AG04450 (cell line): ENCODE measurements at regions of chr4 and their contacts with region 1.

Region 1: DNA sequence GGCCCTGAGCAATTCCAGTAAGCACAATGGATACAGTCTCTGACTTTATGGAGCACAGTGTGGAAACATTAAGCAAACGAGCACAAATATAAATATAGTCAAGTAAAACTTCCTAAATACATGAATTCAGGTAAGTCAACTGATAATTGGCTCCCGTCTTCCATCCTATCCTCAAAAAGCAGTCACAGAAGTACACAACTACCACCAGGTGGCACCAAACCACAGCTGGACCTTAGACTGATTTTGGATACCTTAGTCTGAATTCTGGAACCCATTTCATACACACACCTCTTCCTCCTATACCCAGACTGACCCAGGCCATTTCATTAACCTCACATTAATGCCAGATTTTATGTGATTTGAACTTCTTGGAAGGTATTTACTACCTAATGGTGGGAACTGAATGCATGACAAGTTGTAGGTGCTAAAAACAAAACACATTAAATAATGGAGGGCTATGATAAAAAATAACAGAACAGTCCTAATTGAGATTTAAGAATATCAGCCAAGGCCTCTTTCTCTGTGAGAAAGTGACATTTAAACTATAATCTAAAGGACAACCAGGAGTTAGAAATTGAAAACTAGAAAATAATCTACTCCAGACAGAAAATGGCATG is 77.5 kb downstream of the ELF2 start:
- DNase-seq: peak; percentile 63
- H3K4me3 ChIP-seq: no peak overlapping the region
- H3K27ac ChIP-seq: no peak overlapping the region
- H3K27me3 ChIP-seq: no peaks in the 10 kb centered on the region
- CTCF ChIP-seq: peak; percentile 89

Region 2: GRCh38 chr4:138595731-138596460 is 503.6 kb before region 1 on chr4:
- CTCF ChIA-PET with region 1: no interaction called
- POLR2A ChIA-PET with region 1: no interaction called
- DNase-seq: no peak
- H3K4me3 ChIP-seq: no peak overlapping the region
- H3K27ac ChIP-seq: no peak overlapping the region
- H3K27me3 ChIP-seq: no peaks in the 10 kb centered on the region
- CTCF ChIP-seq: no peak

Region 3: DNA sequence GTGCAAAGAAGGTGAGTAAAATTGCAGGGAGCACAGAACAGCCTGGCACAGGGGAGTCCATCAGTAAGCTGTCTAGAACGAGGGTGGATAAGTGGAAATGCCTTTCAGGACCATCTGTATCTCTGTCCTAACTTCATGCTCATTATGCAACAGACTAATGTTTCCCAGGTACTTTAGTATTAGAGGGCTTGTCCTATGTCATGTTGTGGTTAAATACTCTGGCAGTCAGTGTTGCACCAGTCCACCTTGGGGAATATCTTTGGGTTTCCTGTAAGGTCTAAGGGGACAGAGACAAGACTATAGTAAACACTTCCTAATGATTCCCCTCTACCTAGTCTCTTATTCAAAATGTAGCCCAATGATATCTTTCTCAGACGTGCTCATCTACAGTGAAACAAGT is 62.6 kb before region 1 on chr4:
- CTCF ChIA-PET with region 1: no interaction called
- POLR2A ChIA-PET with region 1: no interaction called
- DNase-seq: no peak
- H3K4me3 ChIP-seq: no peak overlapping the region
- H3K27ac ChIP-seq: no peak overlapping the region
- H3K27me3 ChIP-seq: no peaks in the 10 kb centered on the region
- CTCF ChIP-seq: no peak

Region 4: DNA sequence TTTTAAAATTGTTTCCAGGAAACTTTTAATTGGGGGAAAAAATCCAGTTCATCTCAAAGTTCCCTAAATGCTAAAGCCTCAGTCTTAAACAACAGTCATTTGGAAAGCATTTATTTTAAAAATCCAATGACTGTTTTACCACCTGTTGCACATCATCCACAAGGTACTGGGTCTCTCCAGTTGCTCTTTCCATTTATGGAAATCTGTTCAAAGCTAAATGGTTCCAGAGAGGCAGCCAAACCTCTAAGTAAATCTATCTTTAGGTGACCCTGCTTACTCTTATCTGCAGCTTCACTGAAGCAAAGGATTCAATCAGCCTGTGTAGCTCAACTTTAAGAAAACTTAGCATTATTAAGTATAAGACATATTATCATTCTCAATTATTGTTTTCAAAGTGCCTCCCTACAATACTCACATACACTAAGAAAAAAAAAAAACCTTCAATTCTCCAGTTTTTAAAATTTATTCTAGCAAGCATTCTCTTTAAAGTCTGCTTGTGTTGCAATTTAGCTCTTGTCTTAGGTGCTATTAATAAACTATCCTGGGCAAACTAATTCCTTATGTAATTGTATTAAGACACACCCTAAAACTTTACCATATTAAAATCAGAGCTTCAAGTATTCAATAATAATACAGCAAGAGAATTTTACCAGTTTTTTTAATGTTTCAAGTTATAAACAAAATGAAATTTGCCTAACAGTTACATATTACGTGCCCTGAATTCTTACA is 23.3 kb before region 1 on chr4:
- CTCF ChIA-PET with region 1: interaction called, 19 read pairs
- POLR2A ChIA-PET with region 1: no interaction called
- DNase-seq: no peak
- H3K4me3 ChIP-seq: no peak overlapping the region
- H3K27ac ChIP-seq: no peak overlapping the region
- H3K27me3 ChIP-seq: no peaks in the 10 kb centered on the region
- CTCF ChIP-seq: no peak

Region 5: GRCh38 chr4:139083956-139084803 is 15.3 kb before region 1 on chr4:
- CTCF ChIA-PET with region 1: interaction called, 20 read pairs
- POLR2A ChIA-PET with region 1: interaction called, 3 read pairs
- DNase-seq: peak; percentile 72
- H3K4me3 ChIP-seq: peak overlapping the region; percentile 99
- H3K27ac ChIP-seq: peak overlapping the region; percentile 93
- H3K27me3 ChIP-seq: no peaks in the 10 kb centered on the region
- CTCF ChIP-seq: peak; percentile 17; the same call in 1 of the 2 replicates

Region 6: DNA sequence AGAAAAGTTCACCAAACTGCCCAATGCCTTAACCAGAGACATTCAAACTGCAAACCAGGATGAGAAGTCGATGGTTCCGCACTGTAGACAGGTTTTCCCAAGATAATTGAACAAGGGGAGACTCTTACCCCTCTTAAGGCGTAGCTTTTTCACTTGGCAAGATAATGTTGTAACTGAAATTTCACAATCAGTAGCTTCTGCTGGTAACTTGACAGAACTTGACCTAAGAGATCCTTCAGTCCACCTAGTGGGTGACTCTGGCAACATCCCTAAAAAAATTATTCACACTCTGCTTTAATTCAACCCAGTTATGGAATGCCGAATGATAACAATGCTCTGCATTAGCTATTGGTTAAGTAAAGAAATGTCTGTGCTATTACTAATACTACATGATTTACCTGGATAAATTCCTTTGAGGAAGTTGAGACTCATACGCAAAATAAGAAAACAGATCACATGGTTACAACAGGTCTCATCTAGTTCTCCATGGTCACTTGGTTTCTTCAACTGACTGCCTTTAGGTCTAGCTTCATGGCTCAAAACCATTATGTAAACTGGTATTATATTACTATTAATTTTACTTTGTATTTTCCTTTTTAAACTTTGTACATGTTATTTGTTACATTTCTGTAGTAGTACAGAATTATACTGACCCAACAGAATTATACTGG is 68.4 kb after region 1 on chr4:
- CTCF ChIA-PET with region 1: interaction called, 17 read pairs
- POLR2A ChIA-PET with region 1: no interaction called
- DNase-seq: no peak
- H3K4me3 ChIP-seq: no peak overlapping the region
- H3K27ac ChIP-seq: no peak overlapping the region
- H3K27me3 ChIP-seq: no peaks in the 10 kb centered on the region
- CTCF ChIP-seq: peak; percentile 58